ENCODE measurements at regions of chr1 and their contacts with region 1.

Region 1: GRCh38 chr1:230978491-230979388 is at the starts of genes ARV1 and TTC13:
- DNase-seq: peak; percentile 96
- H3K4me3 Mint-ChIP-seq: peak within 1 kb of the TSS; percentile 98
- H3K27ac Mint-ChIP-seq: peak within 1 kb of the TSS; percentile 93
- H3K4me1 Mint-ChIP-seq: peaks cover 41% of the 10 kb centered on the region
- H3K27me3 Mint-ChIP-seq: no peaks in the 10 kb centered on the region
- total RNA-seq, gene ARV1: 10.7 and 11.3 TPM in 2 replicates
- total RNA-seq, gene TTC13: 17.5 and 17.7 TPM in 2 replicates

Region 2: GRCh38 chr1:230642263-230642959 is 336.3 kb before region 1 on chr1 and contains the start of gene COG2:
- intact Hi-C with region 1: loop called (anchors 2 kb)
- DNase-seq: peak; percentile 92
- H3K4me3 Mint-ChIP-seq: peak within 1 kb of the TSS; percentile 98
- H3K27ac Mint-ChIP-seq: peak within 1 kb of the TSS; percentile 95
- H3K4me1 Mint-ChIP-seq: peaks cover 41% of the 10 kb centered on the region
- H3K27me3 Mint-ChIP-seq: peaks cover 19% of the 10 kb centered on the region
- total RNA-seq, gene COG2: 36.9 and 38.8 TPM in 2 replicates

Region 3: DNA sequence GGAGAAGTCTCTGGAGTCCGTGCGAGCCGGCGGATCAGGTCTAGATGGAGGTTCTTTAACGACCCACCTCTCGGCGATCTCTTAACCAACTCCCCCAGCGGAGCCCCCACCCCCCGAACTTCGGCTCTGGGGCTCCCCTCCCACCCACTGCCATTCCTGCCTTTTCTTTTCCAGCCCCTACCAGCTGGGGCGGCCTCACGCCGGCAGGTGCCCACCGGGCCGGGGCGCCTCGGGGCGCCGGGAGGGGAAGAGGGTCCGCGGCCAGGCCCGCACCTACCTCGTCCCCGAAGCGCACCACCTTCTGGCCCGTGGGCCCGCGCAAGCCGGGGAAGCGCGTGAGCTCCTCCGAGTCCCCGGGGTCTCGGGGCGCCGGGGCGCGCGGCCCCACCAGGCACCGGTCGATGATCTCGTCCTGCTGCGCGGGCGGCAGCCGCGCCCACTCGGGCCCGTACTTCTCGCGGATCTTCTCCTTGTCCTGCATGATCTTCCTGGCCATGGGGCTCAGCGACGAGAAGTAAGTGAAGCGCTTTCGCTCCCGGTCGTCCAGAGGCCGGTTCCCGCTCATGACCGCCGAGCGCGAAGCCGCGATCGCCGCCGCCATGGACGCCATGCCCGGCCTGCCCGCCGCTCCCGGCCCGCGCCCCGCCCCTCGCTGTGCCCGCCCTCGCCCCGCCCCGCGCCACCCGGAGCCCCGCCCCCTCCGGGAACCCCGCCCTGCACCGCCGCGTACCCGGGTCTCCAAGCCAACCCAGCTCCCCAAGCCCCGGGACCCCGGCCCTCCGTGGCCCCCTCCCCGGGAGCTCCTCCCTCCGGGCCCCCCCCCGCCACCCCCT is 110.6 kb before region 1 on chr1 and contains the start of gene C1orf198:
- intact Hi-C with region 1: loop called (anchors 2 kb)
- DNase-seq: peak; percentile 67
- H3K4me3 Mint-ChIP-seq: peak within 1 kb of the TSS; percentile 82
- H3K27ac Mint-ChIP-seq: peak within 1 kb of the TSS; percentile 64
- H3K4me1 Mint-ChIP-seq: peaks cover 19% of the 10 kb centered on the region
- H3K27me3 Mint-ChIP-seq: peaks cover 31% of the 10 kb centered on the region
- total RNA-seq, gene C1orf198: 8.9 and 9.1 TPM in 2 replicates

Region 4: DNA sequence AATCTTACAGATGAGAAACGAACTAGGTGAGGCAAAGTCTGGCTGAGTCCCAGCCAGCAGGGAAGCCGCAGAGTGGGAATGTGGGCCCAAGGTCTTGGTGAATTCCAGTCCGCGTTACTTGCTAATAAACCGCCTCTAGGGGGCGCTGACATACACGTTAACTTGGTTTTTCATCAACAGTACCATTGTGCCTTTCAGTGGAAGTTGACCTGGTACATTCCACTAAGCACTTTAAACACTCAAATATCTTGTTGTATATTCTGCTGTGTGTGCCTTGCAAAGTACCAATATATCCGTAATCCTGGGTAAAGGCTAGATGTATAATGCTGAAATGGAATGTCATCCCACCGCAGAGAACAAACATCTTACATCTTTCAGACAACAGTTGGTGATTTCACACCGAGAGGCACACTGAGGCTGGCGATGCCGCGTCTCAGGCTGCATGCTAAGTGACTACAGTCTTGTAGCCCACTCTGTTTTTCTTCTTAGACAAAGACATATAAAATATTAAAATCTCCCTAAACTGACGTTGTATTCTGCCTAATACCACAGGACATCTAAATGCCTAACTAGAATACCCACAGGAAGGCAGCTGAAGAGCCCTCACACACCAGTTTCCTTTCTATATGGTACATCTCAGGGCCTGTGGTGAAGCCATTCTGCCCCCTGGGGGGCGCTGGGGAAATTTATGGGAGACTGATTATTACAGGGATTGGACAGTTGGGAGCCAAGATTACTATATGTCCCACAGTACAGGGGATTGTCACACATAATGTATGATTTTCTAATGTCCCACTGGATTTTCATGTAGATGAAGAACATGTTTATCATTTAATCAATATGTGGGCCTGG is 61.2 kb before region 1 on chr1:
- intact Hi-C with region 1: loop called (anchors 1 kb)
- DNase-seq: peak; percentile 41
- H3K4me3 Mint-ChIP-seq: no peak overlapping the region
- H3K27ac Mint-ChIP-seq: no peak overlapping the region
- H3K4me1 Mint-ChIP-seq: no peaks in the 10 kb centered on the region
- H3K27me3 Mint-ChIP-seq: no peaks in the 10 kb centered on the region

Region 5: GRCh38 chr1:230948903-230949302 is 29.8 kb before region 1 on chr1:
- intact Hi-C with region 1: no loop called
- DNase-seq: no peak
- H3K4me3 Mint-ChIP-seq: no peak overlapping the region
- H3K27ac Mint-ChIP-seq: no peak overlapping the region
- H3K4me1 Mint-ChIP-seq: no peaks in the 10 kb centered on the region
- H3K27me3 Mint-ChIP-seq: no peaks in the 10 kb centered on the region

Region 6: GRCh38 chr1:231040019-231040799 is 61.5 kb after region 1 on chr1 and contains the start of gene FAM89A:
- intact Hi-C with region 1: loop called (anchors 2 kb)
- DNase-seq: peak; percentile 59
- H3K4me3 Mint-ChIP-seq: peak within 1 kb of the TSS; percentile 79
- H3K27ac Mint-ChIP-seq: no peak within 1 kb of the TSS
- H3K4me1 Mint-ChIP-seq: peaks cover 29% of the 10 kb centered on the region
- H3K27me3 Mint-ChIP-seq: peaks cover 32% of the 10 kb centered on the region
- total RNA-seq, gene FAM89A: 16.1 and 18.7 TPM in 2 replicates

Region 7: GRCh38 chr1:231211005-231211857 is 232.5 kb after region 1 on chr1:
- intact Hi-C with region 1: loop called (anchors 1 kb)
- DNase-seq: peak; percentile 81
- H3K4me3 Mint-ChIP-seq: peak overlapping the region; percentile 80
- H3K27ac Mint-ChIP-seq: no peak overlapping the region
- H3K4me1 Mint-ChIP-seq: peaks cover 10% of the 10 kb centered on the region
- H3K27me3 Mint-ChIP-seq: peaks cover 3% of the 10 kb centered on the region

Region 8: GRCh38 chr1:231240883-231241735 is 262.4 kb after region 1 on chr1 and contains the start of gene GNPAT:
- intact Hi-C with region 1: loop called (anchors 1 kb)
- DNase-seq: peak; percentile 89
- H3K4me3 Mint-ChIP-seq: peak within 1 kb of the TSS; percentile 99
- H3K27ac Mint-ChIP-seq: peak within 1 kb of the TSS; percentile 96
- H3K4me1 Mint-ChIP-seq: peaks cover 44% of the 10 kb centered on the region
- H3K27me3 Mint-ChIP-seq: no peaks in the 10 kb centered on the region
- total RNA-seq, gene GNPAT: 46.9 and 50.9 TPM in 2 replicates